Heart right ventricle (tissue), 16 donors: ENCODE measurements at regions of chr1 and their contacts with region 1.

Region 1: DNA sequence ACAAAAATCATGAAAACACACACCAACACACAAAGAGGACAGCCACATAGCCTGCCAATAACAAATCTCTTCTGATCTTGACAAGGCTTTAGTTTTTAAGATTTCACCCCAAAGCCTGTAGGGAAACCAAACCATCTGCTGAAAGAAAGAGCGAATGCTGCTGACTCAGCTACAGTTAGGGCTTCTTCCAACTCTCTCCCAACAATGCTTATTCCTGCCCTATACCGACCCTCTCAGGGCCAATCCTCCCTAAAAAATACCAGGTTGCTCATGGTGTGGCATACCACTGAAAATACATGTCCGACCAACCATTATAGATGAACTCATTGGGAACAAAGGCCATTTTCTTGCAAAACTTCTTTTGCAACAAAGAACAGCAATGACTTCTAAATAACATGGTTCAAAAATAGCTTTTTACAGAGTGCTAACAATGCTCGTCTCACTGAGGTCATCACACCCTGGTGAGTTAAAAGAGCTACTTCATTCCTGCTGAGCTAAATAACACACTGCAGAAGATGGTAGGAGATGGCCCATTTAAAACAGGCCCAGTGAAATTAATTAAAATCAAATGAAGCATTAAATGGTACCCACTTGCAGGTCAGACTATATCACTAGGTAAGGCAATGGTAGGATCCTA is 86.1 kb downstream of the KIAA0319L start:
- DNase-seq: no peak
- ATAC-seq: peak in 3 of 8 donors; percentile 37 to 65 (median 60)
- H3K4me3 ChIP-seq: no peak overlapping the region
- H3K27ac ChIP-seq: peak overlapping the region in 2 of 10 donors; percentile 7 to 11
- H3K4me1 ChIP-seq: peaks cover 0 to 18% (median 4%) of the 10 kb centered on the region in 9 donors
- H3K27me3 ChIP-seq: no peaks in the 10 kb centered on the region
- CTCF ChIP-seq: no peak

Region 2: DNA sequence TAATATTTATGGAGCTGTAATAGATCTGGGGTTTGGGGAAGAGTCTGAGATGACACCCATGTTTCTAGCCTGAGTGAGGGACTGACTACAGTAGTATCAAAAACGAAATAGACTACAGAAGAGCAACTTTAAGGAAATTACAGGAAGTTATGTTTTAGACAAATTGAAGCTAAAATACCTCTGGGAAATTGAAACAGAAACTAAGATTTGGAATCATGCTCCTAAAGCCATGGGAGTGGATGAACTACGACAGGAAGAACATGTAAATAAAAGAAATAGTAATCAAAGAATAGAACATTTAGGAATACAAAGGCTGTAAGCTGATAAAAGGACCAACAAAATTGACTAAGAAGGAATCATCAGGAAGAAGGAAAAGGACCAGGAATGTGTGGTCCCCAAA is 17.2 kb after region 1 on chr1:
- intact Hi-C with region 1: loop called in 1 of 10 experiments (anchors 2 kb)
- DNase-seq: no peak
- ATAC-seq: peak in 2 of 8 donors; percentile 35 to 47
- H3K4me3 ChIP-seq: peak overlapping the region in 6 of 10 donors; percentile 5 to 34 (median 21)
- H3K27ac ChIP-seq: peak overlapping the region in 7 of 10 donors; percentile 4 to 68 (median 32)
- H3K4me1 ChIP-seq: peaks cover 0 to 21% (median 14%) of the 10 kb centered on the region in 9 donors
- H3K27me3 ChIP-seq: no peaks in the 10 kb centered on the region
- CTCF ChIP-seq: no peak

Region 3: GRCh38 chr1:35568975-35569395 is 97.9 kb after region 1 on chr1:
- intact Hi-C with region 1: no loop called
- DNase-seq: peak in 1 of 2 donors; percentile 51
- ATAC-seq: peak; percentile 12 to 69 (median 60)
- H3K4me3 ChIP-seq: no peak overlapping the region
- H3K27ac ChIP-seq: no peak overlapping the region
- H3K4me1 ChIP-seq: peaks cover 0 to 19% (median 8%) of the 10 kb centered on the region in 9 donors
- H3K27me3 ChIP-seq: peaks cover 12 to 49% (median 37%) of the 10 kb centered on the region in 7 donors
- CTCF ChIP-seq: peak; percentile 53 to 89 (median 85)